Caco-2 (cell line): ENCODE measurements at regions of chr4 and their contacts with region 1.

Region 1: GRCh38 chr4:150209140-150209829 is 131.0 kb downstream of the DCLK2 start:
- DNase-seq: peak; percentile 68 to 71
- H3K4me3 ChIP-seq: no peak overlapping the region
- H3K4me3 Mint-ChIP-seq: no peak overlapping the region
- H3K27ac Mint-ChIP-seq: no peak overlapping the region
- H3K4me1 ChIP-seq: no peaks in the 10 kb centered on the region
- H3K4me1 Mint-ChIP-seq: no peaks in the 10 kb centered on the region
- H3K27me3 ChIP-seq: no peaks in the 10 kb centered on the region
- H3K27me3 Mint-ChIP-seq: no peaks in the 10 kb centered on the region
- CTCF ChIP-seq: peak; percentile 34 to 63

Region 2: DNA sequence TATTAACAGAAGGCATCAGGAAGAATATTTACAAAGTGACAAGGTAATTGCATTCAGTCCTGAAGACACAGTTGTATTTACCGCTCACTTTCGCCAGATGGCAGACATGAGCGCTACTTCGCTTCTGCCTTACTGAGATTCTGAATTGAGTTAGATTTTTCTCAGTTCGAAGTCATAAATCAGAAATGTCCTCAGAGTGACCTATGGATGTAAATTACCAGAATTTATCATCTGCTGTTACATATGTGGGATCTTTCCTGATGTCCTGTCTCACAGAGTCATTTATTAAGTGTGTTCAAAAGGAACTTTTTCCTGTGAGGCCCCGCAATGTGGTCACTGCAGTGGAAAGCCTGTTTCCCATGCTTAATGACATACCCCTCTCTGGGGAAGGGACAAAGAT is 228.3 kb before region 1 on chr4:
- CTCF ChIA-PET with region 1: no interaction called
- POLR2A ChIA-PET with region 1: no interaction called
- intact Hi-C with region 1: loop called (anchors 1 kb)
- DNase-seq: peak; percentile 35 to 50
- H3K4me3 ChIP-seq: no peak overlapping the region
- H3K4me3 Mint-ChIP-seq: no peak overlapping the region
- H3K27ac Mint-ChIP-seq: no peak overlapping the region
- H3K4me1 ChIP-seq: no peaks in the 10 kb centered on the region
- H3K4me1 Mint-ChIP-seq: no peaks in the 10 kb centered on the region
- H3K27me3 ChIP-seq: no peaks in the 10 kb centered on the region
- H3K27me3 Mint-ChIP-seq: peaks cover 7% of the 10 kb centered on the region
- CTCF ChIP-seq: peak; percentile 68

Region 3: DNA sequence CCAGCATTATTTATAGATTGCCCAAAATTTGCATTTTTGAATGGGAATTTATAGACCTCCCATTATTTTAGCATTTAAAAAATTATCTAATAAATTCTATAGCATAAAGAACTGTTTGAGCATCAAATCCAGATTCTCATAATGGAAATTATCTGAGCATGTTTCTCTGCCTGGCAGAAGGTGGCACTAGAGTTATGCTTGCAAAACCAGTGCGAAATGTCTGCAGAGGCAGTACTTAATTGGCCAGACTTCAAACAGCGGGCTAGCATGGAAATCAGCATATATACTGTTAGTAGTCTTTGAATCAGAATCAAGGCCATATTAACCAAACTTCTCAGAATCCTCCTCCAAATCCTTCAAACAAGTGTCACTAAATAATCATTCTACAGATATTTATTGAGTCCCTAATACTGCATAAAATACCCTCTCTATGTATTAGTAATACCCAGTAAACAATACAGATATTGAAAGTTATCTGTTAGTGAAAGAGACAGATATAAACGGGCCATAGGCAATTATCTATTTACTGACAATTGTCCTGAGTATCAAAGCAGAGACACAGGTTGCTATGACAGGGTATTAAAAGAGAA is 209.7 kb before region 1 on chr4:
- CTCF ChIA-PET with region 1: interaction called, 7 read pairs
- POLR2A ChIA-PET with region 1: no interaction called
- intact Hi-C with region 1: loop called (anchors 1 kb)
- DNase-seq: peak in 1 of 2 experiments; percentile 31
- H3K4me3 ChIP-seq: no peak overlapping the region
- H3K4me3 Mint-ChIP-seq: no peak overlapping the region
- H3K27ac Mint-ChIP-seq: no peak overlapping the region
- H3K4me1 ChIP-seq: no peaks in the 10 kb centered on the region
- H3K4me1 Mint-ChIP-seq: no peaks in the 10 kb centered on the region
- H3K27me3 ChIP-seq: no peaks in the 10 kb centered on the region
- H3K27me3 Mint-ChIP-seq: no peaks in the 10 kb centered on the region
- CTCF ChIP-seq: peak; percentile 54 to 64

Region 4: GRCh38 chr4:150010525-150011126 is 198.7 kb before region 1 on chr4:
- CTCF ChIA-PET with region 1: interaction called, 14 read pairs
- POLR2A ChIA-PET with region 1: no interaction called
- intact Hi-C with region 1: loop called (anchors 1 kb)
- DNase-seq: peak; percentile 42 to 47
- H3K4me3 ChIP-seq: no peak overlapping the region
- H3K4me3 Mint-ChIP-seq: no peak overlapping the region
- H3K27ac Mint-ChIP-seq: no peak overlapping the region
- H3K4me1 ChIP-seq: no peaks in the 10 kb centered on the region
- H3K4me1 Mint-ChIP-seq: no peaks in the 10 kb centered on the region
- H3K27me3 ChIP-seq: no peaks in the 10 kb centered on the region; the same call in none of the 2 replicates
- H3K27me3 Mint-ChIP-seq: no peaks in the 10 kb centered on the region
- CTCF ChIP-seq: peak; percentile 21 to 53